ENCODE measurements at regions of chr13 and their contacts with region 1.

Region 1: GRCh38 chr13:71021825-71022422 is 845.1 kb downstream of the DACH1 start:
- ATAC-seq: peak in 4 of 8 experiments; percentile 69 to 80 (median 72)
- H3K4me3 ChIP-seq: no peak overlapping the region
- H3K27ac ChIP-seq: no peak overlapping the region
- H3K4me1 ChIP-seq: peaks cover 0 to 2% of the 10 kb centered on the region in 2 donors

Region 2: DNA sequence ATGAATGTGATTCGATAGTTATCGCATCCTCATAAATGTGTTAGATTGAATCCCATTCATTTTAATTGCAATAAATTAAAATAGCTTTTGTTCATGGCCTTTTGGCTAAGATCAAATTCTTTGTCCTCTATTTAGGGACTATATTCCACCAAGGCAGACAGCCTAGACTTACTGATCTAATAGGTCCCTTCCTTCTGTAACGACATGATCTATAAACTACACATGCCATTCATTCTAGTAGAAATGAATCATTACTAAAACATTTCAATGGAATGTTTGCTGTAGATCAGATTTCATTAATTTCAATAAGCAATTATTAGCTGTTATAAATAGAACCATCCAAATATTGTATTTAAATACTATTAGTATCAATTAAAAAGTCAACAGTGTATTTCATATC is 387.0 kb before region 1 on chr13:
- in situ Hi-C with region 1: no loop called
- ATAC-seq: no peak
- H3K4me3 ChIP-seq: no peak overlapping the region
- H3K27ac ChIP-seq: no peak overlapping the region
- H3K4me1 ChIP-seq: no peaks in the 10 kb centered on the region

Region 3: DNA sequence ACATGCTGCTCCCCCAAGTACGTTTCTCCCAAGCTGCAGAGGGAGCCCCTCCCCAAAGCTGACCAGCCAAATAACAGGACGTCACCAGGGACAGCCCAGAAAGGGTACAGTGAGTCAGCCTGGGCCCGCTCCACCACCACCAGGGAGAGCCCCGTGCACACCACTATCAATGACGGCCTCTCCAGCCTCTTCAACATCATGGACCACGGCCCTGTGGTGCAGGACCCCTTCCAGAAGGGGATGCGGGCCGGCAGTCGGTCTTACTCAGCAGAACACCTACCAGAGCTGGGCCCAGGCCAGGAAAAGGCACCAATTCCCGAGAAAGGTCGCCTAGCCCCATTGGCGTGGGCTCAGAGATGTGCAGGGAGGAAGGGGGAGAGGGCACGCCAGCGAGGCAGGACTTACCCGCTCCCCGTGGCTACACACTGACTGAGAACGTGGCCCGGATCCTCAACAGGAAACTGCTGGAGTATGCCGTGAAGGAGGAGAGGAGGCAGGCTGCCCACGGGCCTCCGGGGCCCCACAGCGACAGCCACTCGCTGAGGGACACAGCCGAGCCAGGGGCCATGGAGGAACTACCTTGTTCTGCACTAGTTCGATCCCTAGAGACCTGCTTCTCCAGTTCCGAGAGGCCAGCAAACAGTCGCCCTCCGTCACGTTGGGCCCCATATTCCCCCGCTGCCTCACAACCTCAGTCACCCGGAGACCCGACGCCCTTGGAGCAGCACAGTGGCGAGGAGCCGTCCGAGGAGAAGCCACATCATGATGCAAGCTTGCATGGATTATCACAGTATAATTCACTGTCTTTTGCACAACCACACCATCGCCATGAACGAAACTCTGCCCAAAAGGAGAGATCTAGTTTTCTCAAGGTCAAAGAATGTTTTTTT is 97.8 kb before region 1 on chr13:
- in situ Hi-C with region 1: loop called in 1 of 9 experiments (anchors 25 kb)
- ATAC-seq: no peak
- H3K4me3 ChIP-seq: no peak overlapping the region
- H3K27ac ChIP-seq: no peak overlapping the region
- H3K4me1 ChIP-seq: peaks cover 0 to 2% of the 10 kb centered on the region in 2 donors

Region 4: DNA sequence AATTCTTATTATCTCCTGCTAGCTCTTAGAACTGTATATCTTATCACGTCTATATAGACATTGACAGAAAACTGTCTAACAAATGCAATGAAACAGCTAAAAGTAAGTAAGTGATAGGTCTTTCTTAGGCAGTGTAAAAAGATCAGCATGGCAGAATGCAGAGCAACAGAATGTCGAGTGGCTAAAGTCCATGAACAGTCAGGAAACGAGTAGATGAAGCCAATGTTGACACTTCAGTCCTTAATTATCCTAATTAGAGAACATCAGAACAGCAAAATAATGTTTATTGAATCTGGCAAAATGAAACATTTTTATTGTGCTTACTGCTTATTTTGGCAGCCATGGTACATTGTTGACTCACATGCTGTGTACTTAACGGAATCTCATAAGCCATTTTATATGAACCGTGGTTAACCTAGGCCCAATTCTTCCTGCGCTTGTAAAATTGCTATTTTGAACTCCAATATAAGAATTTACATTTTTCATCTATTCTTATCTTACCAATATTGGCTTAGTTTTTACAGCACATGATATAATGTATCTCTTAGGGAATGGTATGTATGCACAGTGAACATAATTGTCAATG is 96.9 kb after region 1 on chr13:
- in situ Hi-C with region 1: loop called in 1 of 9 experiments (anchors 25 kb)
- ATAC-seq: no peak
- H3K4me3 ChIP-seq: no peak overlapping the region
- H3K27ac ChIP-seq: no peak overlapping the region
- H3K4me1 ChIP-seq: no peaks in the 10 kb centered on the region

Region 5: DNA sequence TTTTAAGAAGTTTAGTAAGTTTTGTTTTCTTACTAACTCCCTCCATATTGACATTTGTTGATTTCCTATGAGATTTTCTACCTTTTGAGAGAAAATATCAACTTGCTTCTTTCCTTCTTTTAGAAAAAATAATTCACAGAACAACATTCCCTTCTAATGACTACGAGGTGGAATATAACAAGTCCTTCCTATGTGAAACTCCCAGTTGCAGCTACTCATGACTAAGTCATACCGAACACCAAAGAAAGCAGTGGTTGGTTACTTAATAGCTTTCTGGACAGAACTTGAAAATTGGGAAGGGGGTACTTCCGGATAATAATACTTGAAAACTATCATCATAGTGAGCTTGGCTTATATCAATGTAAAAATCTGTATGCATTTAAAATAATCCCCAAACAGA is 700.3 kb after region 1 on chr13:
- in situ Hi-C with region 1: no loop called
- ATAC-seq: no peak
- H3K4me3 ChIP-seq: no peak overlapping the region
- H3K27ac ChIP-seq: no peak overlapping the region
- H3K4me1 ChIP-seq: peaks cover 22 to 43% of the 10 kb centered on the region in 2 donors

Measured in motor neuron (in vitro differentiated cells).